ENCODE measurements at regions of chr5 and their contacts with region 1.

Region 1: GRCh38 chr5:96344678-96345577 is 88.1 kb downstream of the PCSK1 start:
- DNase-seq: peak; percentile 31 to 46
- H3K4me3 ChIP-seq: no peak overlapping the region
- H3K4me1 ChIP-seq: peaks cover 2% of the 10 kb centered on the region; the same call in 1 of the 2 replicates
- H3K27me3 ChIP-seq: peaks cover 15% of the 10 kb centered on the region

Region 2: GRCh38 chr5:96601811-96602244 is 256.9 kb after region 1 on chr5:
- in situ Hi-C with region 1: loop called (anchors 10 kb)
- DNase-seq: peak; percentile 49 to 78
- H3K4me3 ChIP-seq: no peak overlapping the region
- H3K4me1 ChIP-seq: no peaks in the 10 kb centered on the region
- H3K27me3 ChIP-seq: peaks cover 8% of the 10 kb centered on the region

Measured in HAP-1 (cell line).